ENCODE measurements at regions of chr1 and their contacts with region 1.

Region 1: GRCh38 chr1:98048244-98048643 is 127.4 kb upstream of the DPYD start:
- DNase-seq: peak; percentile 69
- H3K4me3 ChIP-seq: peak overlapping the region; percentile 58
- CTCF ChIP-seq: peak; percentile 18

Region 2: DNA sequence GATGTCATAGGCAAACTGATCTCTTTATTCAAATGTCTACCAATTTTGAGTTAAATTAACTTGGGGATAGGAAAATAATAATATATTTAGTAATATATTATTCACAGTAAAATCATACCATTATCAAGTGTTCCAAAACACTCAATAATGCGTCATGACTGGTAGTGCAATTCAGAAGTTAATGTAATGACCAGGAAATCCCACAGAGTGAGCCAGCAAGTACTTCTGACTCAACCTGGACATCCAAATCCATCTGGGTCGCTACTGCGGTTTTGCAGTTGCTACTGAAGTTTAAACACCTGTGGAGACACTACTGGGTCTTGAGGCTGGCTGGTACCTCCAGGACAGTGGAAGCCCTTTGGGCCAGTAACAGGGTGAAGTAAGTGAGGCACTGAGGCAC is 172.2 kb before region 1 on chr1:
- CTCF ChIA-PET with region 1: no interaction called
- POLR2A ChIA-PET with region 1: no interaction called
- DNase-seq: no peak
- H3K4me3 ChIP-seq: no peak overlapping the region
- CTCF ChIP-seq: no peak

Region 3: GRCh38 chr1:98001764-98002163 is 46.5 kb before region 1 on chr1:
- CTCF ChIA-PET with region 1: interaction called, 45 read pairs
- POLR2A ChIA-PET with region 1: interaction called, 4 read pairs
- DNase-seq: no peak
- H3K4me3 ChIP-seq: no peak overlapping the region
- CTCF ChIP-seq: no peak

Region 4: GRCh38 chr1:98034505-98034904 is 13.7 kb before region 1 on chr1:
- CTCF ChIA-PET with region 1: interaction called, 10 read pairs
- POLR2A ChIA-PET with region 1: no interaction called
- DNase-seq: no peak
- H3K4me3 ChIP-seq: no peak overlapping the region
- CTCF ChIP-seq: no peak

Region 5: DNA sequence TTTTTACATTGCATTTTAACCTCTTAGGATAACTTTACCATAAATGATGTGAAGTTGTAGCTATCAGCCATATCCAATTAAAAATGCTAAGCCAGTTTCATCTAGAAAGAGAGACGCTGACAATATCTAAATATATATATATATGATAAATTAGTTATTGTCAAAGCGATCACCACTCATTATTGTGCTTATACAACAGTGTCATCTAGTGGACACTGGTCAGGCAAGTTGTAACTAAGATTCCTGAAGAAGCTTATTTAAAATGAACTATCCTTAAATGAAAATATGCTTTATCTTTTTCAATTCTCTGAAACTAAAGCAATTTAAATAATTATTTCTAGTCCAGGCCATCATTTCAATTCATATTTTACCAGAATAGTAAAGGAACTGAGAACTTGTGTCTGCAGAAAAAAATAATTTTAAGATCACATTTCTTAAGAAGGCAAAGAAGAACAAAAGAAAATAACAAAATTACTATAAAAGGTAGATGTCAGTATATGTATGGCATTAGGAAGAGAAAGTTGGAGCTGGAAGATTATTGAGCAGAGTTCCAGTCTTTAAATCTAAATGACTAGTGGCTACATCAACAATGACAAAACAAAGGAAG is 420.0 kb after region 1 on chr1:
- CTCF ChIA-PET with region 1: interaction called, 117 read pairs
- POLR2A ChIA-PET with region 1: no interaction called
- DNase-seq: peak; percentile 21
- H3K4me3 ChIP-seq: no peak overlapping the region
- CTCF ChIP-seq: peak; percentile 56